BJ (cell line): ENCODE measurements at regions of chr22 and their contacts with region 1.

Region 1: GRCh38 chr22:32603656-32604435 is 129.2 kb downstream of the FBXO7 start:
- DNase-seq: no peak
- H3K4me3 ChIP-seq: no peak overlapping the region
- H3K27me3 ChIP-seq: no peaks in the 10 kb centered on the region
- CTCF ChIP-seq: no peak

Region 2: DNA sequence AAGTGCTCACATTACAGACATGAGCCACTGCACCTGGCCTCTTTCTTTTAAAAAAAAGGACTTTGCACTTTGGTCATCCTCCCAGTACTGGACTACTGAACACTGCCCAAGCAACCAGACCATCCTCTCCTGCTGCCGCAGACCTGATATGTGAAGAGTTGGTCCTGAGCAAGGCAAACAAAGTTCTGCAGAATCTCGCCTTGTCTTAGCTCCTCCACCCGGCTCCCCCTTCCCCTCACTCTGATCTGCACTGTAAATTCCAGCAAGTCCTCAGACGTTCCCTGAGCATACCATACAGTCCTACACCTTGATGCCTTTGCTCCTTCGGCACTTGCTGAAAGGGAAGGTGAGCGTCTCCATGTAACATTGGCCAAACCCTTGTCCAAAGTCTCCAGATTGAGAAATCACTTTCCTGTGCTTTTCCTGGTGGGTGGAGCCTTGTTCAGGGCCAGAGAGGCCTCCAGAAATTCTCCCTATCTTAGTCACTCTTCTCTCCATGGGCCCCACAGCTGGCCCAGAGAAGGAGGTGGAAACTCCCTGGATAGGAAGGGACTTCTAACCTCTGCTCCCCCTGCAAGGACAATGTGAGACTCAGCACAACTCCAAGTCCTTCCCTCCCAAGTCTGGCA is 150.7 kb after region 1 on chr22:
- CTCF ChIA-PET with region 1: no interaction called
- POLR2A ChIA-PET with region 1: interaction called, 10 read pairs
- DNase-seq: no peak
- H3K4me3 ChIP-seq: no peak overlapping the region
- H3K27me3 ChIP-seq: no peaks in the 10 kb centered on the region
- CTCF ChIP-seq: no peak